ENCODE measurements at regions of chr3 and their contacts with region 1.

Region 1: DNA sequence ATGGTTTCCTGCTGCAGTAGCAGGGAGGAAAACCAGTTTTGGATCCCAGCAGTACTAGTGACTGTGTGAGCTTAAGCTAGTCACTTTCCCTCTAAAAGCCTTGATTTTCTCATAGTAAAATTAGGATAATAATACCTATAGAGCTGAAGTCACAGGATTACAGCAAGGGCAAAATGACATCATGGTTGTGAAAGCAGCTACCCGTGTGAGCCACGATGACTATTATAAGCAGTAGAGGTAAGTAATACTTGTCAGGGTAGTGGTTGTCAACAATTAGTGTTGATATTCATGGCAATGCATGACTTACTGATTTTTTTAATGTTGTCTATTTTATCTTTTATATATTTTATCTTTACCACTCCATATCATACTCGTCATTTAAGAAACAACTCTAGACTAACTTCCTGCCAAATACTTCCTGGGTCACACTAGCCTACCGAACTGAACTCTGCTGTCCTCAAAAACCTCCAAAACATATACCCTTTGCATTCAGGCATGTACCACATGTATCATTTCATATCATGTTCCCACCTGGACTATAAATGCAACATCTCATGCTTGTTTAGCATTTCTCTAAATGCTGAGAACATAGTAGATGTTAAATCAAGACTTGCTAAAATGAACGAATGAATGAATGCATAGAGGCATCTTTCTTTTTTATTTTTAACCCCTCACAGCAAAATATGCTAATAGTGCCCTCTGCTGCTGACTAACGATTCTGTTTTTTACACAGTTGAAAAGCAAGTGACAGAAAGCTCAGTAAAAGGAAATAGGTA is 172.6 kb downstream of the P3H2 start:
- DNase-seq: no peak
- ATAC-seq: no peak
- H3K4me3 Mint-ChIP-seq: no peak overlapping the region
- H3K27ac Mint-ChIP-seq: no peak overlapping the region
- H3K4me1 Mint-ChIP-seq: no peaks in the 10 kb centered on the region
- H3K27me3 Mint-ChIP-seq: peaks cover 6% of the 10 kb centered on the region
- CTCF ChIP-seq: no peak

Region 2: GRCh38 chr3:189270248-189270832 is 677.8 kb before region 1 on chr3:
- CTCF ChIA-PET with region 1: interaction called, 15 read pairs
- POLR2A ChIA-PET with region 1: no interaction called
- intact Hi-C with region 1: loop called (anchors 1 kb)
- DNase-seq: no peak
- ATAC-seq: no peak
- H3K4me3 Mint-ChIP-seq: no peak overlapping the region
- H3K27ac Mint-ChIP-seq: no peak overlapping the region
- H3K4me1 Mint-ChIP-seq: no peaks in the 10 kb centered on the region
- H3K27me3 Mint-ChIP-seq: peaks cover 4% of the 10 kb centered on the region
- CTCF ChIP-seq: no peak

Region 3: GRCh38 chr3:189512039-189512438 is 436.1 kb before region 1 on chr3:
- CTCF ChIA-PET with region 1: interaction called, 9 read pairs
- POLR2A ChIA-PET with region 1: no interaction called
- intact Hi-C with region 1: loop called (anchors 5 kb)
- DNase-seq: no peak
- ATAC-seq: peak; percentile 25
- H3K4me3 Mint-ChIP-seq: no peak overlapping the region
- H3K27ac Mint-ChIP-seq: no peak overlapping the region
- H3K4me1 Mint-ChIP-seq: peaks cover 21% of the 10 kb centered on the region
- H3K27me3 Mint-ChIP-seq: peaks cover 2% of the 10 kb centered on the region
- CTCF ChIP-seq: no peak

Region 4: GRCh38 chr3:189961525-189962161 is 13.5 kb after region 1 on chr3:
- CTCF ChIA-PET with region 1: interaction called, 22 read pairs
- POLR2A ChIA-PET with region 1: no interaction called
- intact Hi-C with region 1: no loop called
- DNase-seq: no peak
- ATAC-seq: peak; percentile 57
- H3K4me3 Mint-ChIP-seq: no peak overlapping the region
- H3K27ac Mint-ChIP-seq: no peak overlapping the region
- H3K4me1 Mint-ChIP-seq: no peaks in the 10 kb centered on the region
- H3K27me3 Mint-ChIP-seq: peaks cover 2% of the 10 kb centered on the region
- CTCF ChIP-seq: peak; percentile 36

Measured in activated B cell treated with CpG ODN at 0.5 μM for 24 hours (primary cell).